ENCODE measurements at regions of chr6 and their contacts with region 1.

Region 1: GRCh38 chr6:52361945-52362442 is at the start of gene PAQR8:
- DNase-seq: peak; percentile 80 to 90 (median 88)
- H3K4me3 ChIP-seq: peak within 1 kb of the TSS; percentile 81 to 97 (median 87)
- H3K27ac ChIP-seq: peak within 1 kb of the TSS; percentile 42 to 78
- H3K4me1 ChIP-seq: peaks cover 5 to 22% (median 19%) of the 10 kb centered on the region in 4 experiments
- H3K27me3 ChIP-seq: no peaks in the 10 kb centered on the region

Region 2: DNA sequence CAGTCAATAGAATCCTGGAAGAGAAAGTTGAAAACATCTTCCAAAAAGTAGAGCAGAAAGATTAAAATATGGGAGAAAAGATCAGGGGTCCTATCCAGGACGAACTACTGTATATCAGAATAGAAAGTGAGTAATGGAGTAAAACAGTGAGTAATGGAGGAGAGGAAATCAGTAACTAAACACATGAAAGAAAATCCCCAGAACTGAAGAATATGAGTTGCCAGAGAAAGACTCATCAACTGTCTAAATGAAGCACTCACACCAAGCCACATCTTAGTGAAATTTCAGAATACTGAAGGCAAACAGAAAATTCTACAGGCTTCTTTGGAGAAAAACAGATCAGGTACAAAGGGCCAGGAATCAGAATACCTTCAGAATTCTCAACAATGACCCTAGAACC is 160.9 kb before region 1 on chr6:
- CTCF ChIA-PET with region 1: no interaction called
- POLR2A ChIA-PET with region 1: no interaction called
- DNase-seq: no peak
- H3K4me3 ChIP-seq: no peak overlapping the region
- H3K27ac ChIP-seq: no peak overlapping the region
- H3K4me1 ChIP-seq: no peaks in the 10 kb centered on the region
- H3K27me3 ChIP-seq: no peaks in the 10 kb centered on the region

Region 3: GRCh38 chr6:52328303-52328662 is 33.7 kb before region 1 on chr6:
- CTCF ChIA-PET with region 1: interaction called, 10 read pairs
- POLR2A ChIA-PET with region 1: no interaction called
- DNase-seq: peak in 2 of 3 donors; percentile 69 to 80
- H3K4me3 ChIP-seq: peak overlapping the region in 1 of 7 experiments; percentile 9
- H3K27ac ChIP-seq: peak overlapping the region in 1 of 2 experiments; percentile 49
- H3K4me1 ChIP-seq: peaks cover 2 to 19% (median 12%) of the 10 kb centered on the region in 4 experiments
- H3K27me3 ChIP-seq: no peaks in the 10 kb centered on the region

Measured in common myeloid progenitor, CD34-positive (primary cell).